ENCODE measurements at regions of chr11 and their contacts with region 1.

Region 1: DNA sequence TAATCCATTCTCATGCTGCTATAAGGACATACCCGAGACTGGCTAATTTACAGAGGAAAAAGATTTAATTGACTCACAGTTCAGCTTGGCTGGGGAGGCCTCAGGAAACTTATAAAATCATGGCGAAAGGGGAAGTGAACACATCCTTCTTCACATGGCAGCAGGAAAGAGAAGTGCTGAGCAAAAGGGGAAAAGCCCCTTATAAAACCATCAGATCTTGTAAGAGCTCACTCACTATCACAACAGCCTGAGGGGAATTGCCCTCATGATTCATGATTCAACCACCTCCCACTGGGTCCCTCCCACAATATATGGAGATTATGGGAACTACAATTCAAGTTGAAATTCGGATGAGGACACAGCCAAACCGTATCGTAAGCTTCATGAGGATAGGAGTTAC is 3.8 kb upstream of the CYB5R2 start:
- DNase-seq: peak in 1 of 2 experiments; percentile 44
- ATAC-seq: peak in 1 of 2 experiments; percentile 16; a peak in 2 of 6 replicates
- H3K4me3 ChIP-seq: no peak overlapping the region
- H3K27ac ChIP-seq: no peak overlapping the region
- H3K4me1 ChIP-seq: peaks cover 13% of the 10 kb centered on the region; the same call in 1 of the 3 replicates
- CTCF ChIP-seq: no peak
- EP300 ChIP-seq: no peak
- POLR2A ChIP-seq: no peak
- RAD21 ChIP-seq: no peak

Region 2: DNA sequence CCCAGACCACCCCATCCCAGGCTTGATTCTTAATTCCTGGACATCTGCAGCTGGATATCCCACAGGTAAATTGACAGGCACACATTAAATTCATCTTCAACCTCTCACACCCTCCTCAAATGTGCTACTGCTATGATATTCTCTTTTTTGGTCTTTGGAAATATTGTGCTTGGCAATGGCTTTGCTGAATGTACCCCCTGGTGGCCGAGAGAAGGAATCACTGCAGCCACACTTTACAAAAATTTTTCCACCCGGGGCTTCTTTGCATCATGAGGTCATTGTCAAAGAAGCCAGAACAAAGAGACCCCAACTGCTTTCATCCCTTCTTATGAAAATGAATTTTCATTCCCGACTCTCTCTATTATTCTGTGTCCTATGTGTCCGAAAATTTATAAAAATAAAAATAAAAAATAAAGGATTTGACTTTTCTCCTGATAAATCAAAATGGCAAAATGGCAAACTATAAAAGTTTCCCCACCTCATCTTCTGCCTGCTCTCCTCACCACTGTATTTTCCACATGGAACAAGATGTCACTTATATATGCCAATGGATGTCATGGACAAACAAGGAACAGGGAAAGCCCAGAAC is 11.3 kb after region 1 on chr11:
- CTCF ChIA-PET with region 1: interaction called, 28 read pairs
- POLR2A ChIA-PET with region 1: no interaction called
- DNase-seq: peak; percentile 44 to 50
- ATAC-seq: peak; percentile 39 to 75; a peak in 3 of 6 replicates
- H3K4me3 ChIP-seq: no peak overlapping the region
- H3K27ac ChIP-seq: no peak overlapping the region
- H3K4me1 ChIP-seq: no peaks in the 10 kb centered on the region
- CTCF ChIP-seq: peak; percentile 74
- EP300 ChIP-seq: no peak
- POLR2A ChIP-seq: no peak
- RAD21 ChIP-seq: peak; percentile 66 to 69

Measured in A549 (cell line).